ENCODE measurements at regions of chr6 and their contacts with region 1.

Region 1: DNA sequence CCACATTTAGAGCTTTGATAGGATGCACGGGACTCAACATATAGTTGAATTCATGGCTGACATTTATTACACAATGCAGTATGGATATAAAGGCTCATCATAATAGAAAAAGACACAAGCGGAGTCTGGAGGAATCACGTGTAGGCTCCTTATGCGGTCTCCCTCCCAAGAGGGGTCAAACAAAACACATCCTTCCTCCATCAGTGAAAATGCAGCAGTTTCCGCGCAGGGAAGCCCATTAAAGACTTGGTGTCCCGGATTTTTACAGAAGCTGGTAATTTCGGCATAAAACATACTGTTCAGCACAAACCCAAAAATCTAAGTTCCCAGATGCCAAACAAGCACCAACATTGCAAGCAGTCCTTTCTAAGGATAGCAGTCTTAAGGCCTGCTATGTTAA is 1.1 kb downstream of the USP45 start:
- DNase-seq: no peak
- H3K4me3 ChIP-seq: no peak overlapping the region
- H3K4me3 Mint-ChIP-seq: peak overlapping the region; percentile 66 to 97 (median 96)
- H3K27ac ChIP-seq: no peak overlapping the region
- H3K27ac Mint-ChIP-seq: peak overlapping the region in 5 of 7 donors; percentile 64 to 94 (median 70)
- H3K4me1 ChIP-seq: peaks cover 17% of the 10 kb centered on the region
- H3K4me1 Mint-ChIP-seq: peaks cover 17 to 39% (median 27%) of the 10 kb centered on the region in 4 donors
- H3K27me3 ChIP-seq: no peaks in the 10 kb centered on the region
- H3K27me3 Mint-ChIP-seq: no peaks in the 10 kb centered on the region

Region 2: DNA sequence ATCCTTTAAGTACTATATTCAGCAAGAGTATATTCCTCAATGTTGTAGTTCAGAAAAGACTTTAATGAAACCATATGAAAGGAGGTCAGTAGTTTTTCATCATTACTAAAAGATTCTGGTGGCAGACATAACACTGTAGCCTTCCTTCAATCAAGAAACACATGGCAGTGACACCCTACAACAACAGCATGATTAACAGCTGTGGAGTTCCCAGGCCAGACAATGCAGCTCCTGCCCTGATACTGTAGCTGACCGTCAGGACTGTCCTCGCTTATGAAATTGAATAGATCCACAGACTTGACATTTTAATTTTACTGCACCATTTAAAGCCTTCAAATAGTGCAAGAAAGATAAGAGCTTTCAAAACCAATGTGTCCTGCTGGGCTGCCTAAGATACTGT is 42.5 kb before region 1 on chr6:
- CTCF ChIA-PET with region 1: no interaction called
- POLR2A ChIA-PET with region 1: no interaction called
- intact Hi-C with region 1: no loop called
- DNase-seq: no peak
- H3K4me3 ChIP-seq: no peak overlapping the region
- H3K4me3 Mint-ChIP-seq: no peak overlapping the region
- H3K27ac ChIP-seq: no peak overlapping the region
- H3K27ac Mint-ChIP-seq: no peak overlapping the region
- H3K4me1 ChIP-seq: no peaks in the 10 kb centered on the region
- H3K4me1 Mint-ChIP-seq: no peaks in the 10 kb centered on the region
- H3K27me3 ChIP-seq: no peaks in the 10 kb centered on the region
- H3K27me3 Mint-ChIP-seq: no peaks in the 10 kb centered on the region

Region 3: DNA sequence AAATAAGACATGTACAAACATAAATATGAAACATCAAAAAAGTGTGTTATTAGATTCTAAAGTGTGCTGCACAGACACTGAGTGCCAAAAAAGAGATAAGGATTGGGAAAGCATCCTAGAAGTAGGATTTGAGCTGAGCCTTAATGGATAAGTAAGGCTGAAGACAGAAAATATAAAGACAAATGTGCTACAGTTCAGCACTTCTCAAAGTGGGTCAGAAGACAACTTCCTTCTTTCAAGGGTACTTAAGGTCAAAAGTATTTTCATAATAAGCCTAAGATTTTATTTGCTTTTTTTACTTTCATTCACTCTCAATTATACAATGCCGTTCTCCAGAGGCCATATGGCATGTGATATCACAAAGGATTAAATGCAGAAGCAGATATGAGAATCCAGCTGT is 15.7 kb before region 1 on chr6:
- CTCF ChIA-PET with region 1: no interaction called
- POLR2A ChIA-PET with region 1: interaction called, 3 read pairs
- intact Hi-C with region 1: loop called (anchors 2 kb)
- DNase-seq: no peak
- H3K4me3 ChIP-seq: no peak overlapping the region
- H3K4me3 Mint-ChIP-seq: peak overlapping the region in 2 of 8 donors; percentile 0 to 26
- H3K27ac ChIP-seq: no peak overlapping the region
- H3K27ac Mint-ChIP-seq: peak overlapping the region in 5 of 7 donors; percentile 21 to 79 (median 67)
- H3K4me1 ChIP-seq: no peaks in the 10 kb centered on the region
- H3K4me1 Mint-ChIP-seq: peaks cover 4 to 6% (median 4%) of the 10 kb centered on the region in 4 donors
- H3K27me3 ChIP-seq: no peaks in the 10 kb centered on the region
- H3K27me3 Mint-ChIP-seq: no peaks in the 10 kb centered on the region

Region 4: GRCh38 chr6:99568103-99568933 is 54.2 kb after region 1 on chr6 and contains the start of gene CCNC:
- CTCF ChIA-PET with region 1: interaction called, 6 read pairs
- POLR2A ChIA-PET with region 1: interaction called, 13 read pairs
- intact Hi-C with region 1: loop called (anchors 1 kb)
- DNase-seq: peak; percentile 87 to 89 (median 88)
- H3K4me3 ChIP-seq: peak within 1 kb of the TSS; percentile 79 to 86
- H3K4me3 Mint-ChIP-seq: peak within 1 kb of the TSS; percentile 93 to 100 (median 99)
- H3K27ac ChIP-seq: peak within 1 kb of the TSS; percentile 78
- H3K27ac Mint-ChIP-seq: peak within 1 kb of the TSS; percentile 88 to 98 (median 95)
- H3K4me1 ChIP-seq: peaks cover 24% of the 10 kb centered on the region
- H3K4me1 Mint-ChIP-seq: peaks cover 25 to 53% (median 31%) of the 10 kb centered on the region in 4 donors
- H3K27me3 ChIP-seq: no peaks in the 10 kb centered on the region
- H3K27me3 Mint-ChIP-seq: no peaks in the 10 kb centered on the region
- total RNA-seq, gene CCNC: 41.3 to 42.7 TPM